MCF 10A (cell line): ENCODE measurements at regions of chr3 and their contacts with region 1.

Region 1: DNA sequence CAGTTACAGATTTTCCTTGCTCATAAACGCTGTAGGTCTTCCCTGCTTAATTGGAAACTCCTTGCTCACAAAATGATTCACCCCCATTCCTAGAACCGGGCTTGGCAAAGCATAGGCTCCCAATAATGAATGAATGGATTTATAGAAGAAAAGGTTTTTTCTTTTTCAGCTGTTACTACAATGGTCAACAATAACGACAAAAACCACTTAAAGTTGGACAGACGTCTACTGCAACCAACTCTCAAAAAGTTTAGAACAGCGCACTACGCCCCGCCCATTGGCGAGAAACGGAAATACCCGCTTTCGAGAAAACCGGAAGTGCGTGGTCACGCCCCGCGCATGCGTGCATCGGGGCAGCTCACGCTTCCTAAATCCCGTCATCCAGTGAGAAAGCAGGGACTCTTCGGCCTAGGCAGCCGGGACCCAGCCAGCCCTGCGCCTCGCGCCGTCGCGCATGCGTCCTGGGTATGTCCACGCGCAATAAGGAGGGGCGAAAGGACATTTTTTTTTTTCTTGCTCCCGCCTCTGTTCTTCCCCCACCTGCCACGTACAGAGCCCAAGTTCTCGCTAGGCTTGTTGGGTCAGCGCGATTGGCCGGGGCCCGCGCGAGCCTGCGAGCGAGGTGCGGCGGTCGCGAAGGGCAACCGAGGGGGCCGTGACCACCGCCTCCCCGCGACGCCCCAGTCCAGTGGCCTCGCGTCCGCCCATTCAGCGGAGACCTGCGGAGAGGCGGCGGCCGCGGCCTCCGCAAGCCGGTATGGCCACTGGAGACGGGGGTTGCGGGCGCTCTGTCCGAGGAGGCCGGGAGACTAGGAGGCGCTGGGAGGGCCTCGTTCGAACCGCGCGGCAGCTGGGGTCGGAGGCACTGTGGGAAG is at the start of gene TFG:
- DNase-seq: peak; percentile 99
- H3K4me3 Mint-ChIP-seq: peak within 1 kb of the TSS; percentile 89
- H3K27ac Mint-ChIP-seq: peak within 1 kb of the TSS; percentile 96
- H3K4me1 Mint-ChIP-seq: peaks cover 44% of the 10 kb centered on the region
- H3K27me3 Mint-ChIP-seq: no peaks in the 10 kb centered on the region
- CTCF ChIP-seq: no peak
- total RNA-seq, gene TFG: 162 and 168 TPM in 2 replicates

Region 2: DNA sequence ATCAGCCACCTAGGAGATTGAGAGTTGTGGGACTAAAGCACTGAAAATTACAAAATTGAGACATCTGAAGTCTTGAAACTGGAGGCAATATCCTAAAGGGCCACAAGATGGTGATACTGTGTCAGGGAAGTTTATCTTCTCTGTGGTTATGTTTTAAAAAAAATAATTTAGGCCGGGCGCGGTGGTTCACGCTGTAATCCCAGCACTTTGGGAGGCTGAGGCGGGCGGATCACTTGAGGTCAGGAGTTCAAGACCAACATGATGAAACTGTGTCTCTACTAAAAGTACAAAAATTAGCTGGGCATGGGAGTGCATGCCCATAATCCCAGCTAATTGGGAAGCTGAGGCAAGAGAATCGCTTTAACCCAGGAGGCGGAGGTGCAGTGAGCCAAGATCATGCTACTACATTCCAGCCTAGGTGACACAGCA is 392.5 kb before region 1 on chr3:
- CTCF ChIA-PET with region 1: no interaction called
- POLR2A ChIA-PET with region 1: no interaction called
- intact Hi-C with region 1: loop called (anchors 10 kb)
- DNase-seq: peak; percentile 74
- H3K4me3 Mint-ChIP-seq: no peak overlapping the region
- H3K27ac Mint-ChIP-seq: no peak overlapping the region
- H3K4me1 Mint-ChIP-seq: no peaks in the 10 kb centered on the region
- H3K27me3 Mint-ChIP-seq: no peaks in the 10 kb centered on the region
- CTCF ChIP-seq: peak; percentile 72

Region 3: GRCh38 chr3:100650651-100651611 is 58.3 kb before region 1 on chr3:
- CTCF ChIA-PET with region 1: interaction called, 4 read pairs
- POLR2A ChIA-PET with region 1: interaction called, 6 read pairs
- intact Hi-C with region 1: loop called (anchors 2 kb)
- DNase-seq: peak; percentile 68
- H3K4me3 Mint-ChIP-seq: peak overlapping the region; percentile 66
- H3K27ac Mint-ChIP-seq: peak overlapping the region; percentile 87
- H3K4me1 Mint-ChIP-seq: peaks cover 13% of the 10 kb centered on the region
- H3K27me3 Mint-ChIP-seq: no peaks in the 10 kb centered on the region
- CTCF ChIP-seq: no peak

Region 4: GRCh38 chr3:100697172-100697571 is 12.0 kb before region 1 on chr3:
- CTCF ChIA-PET with region 1: interaction called, 7 read pairs
- POLR2A ChIA-PET with region 1: interaction called, 11 read pairs
- intact Hi-C with region 1: no loop called
- DNase-seq: no peak
- H3K4me3 Mint-ChIP-seq: no peak overlapping the region
- H3K27ac Mint-ChIP-seq: no peak overlapping the region
- H3K4me1 Mint-ChIP-seq: peaks cover 14% of the 10 kb centered on the region
- H3K27me3 Mint-ChIP-seq: no peaks in the 10 kb centered on the region
- CTCF ChIP-seq: no peak

Region 5: GRCh38 chr3:100725935-100726513 is 16.8 kb after region 1 on chr3:
- CTCF ChIA-PET with region 1: interaction called, 11 read pairs
- POLR2A ChIA-PET with region 1: interaction called, 7 read pairs
- intact Hi-C with region 1: no loop called
- DNase-seq: no peak
- H3K4me3 Mint-ChIP-seq: no peak overlapping the region
- H3K27ac Mint-ChIP-seq: no peak overlapping the region
- H3K4me1 Mint-ChIP-seq: peaks cover 8% of the 10 kb centered on the region
- H3K27me3 Mint-ChIP-seq: no peaks in the 10 kb centered on the region
- CTCF ChIP-seq: no peak